Motor neuron (in vitro differentiated cells): ENCODE measurements at regions of chr11 and their contacts with region 1.

Region 1: DNA sequence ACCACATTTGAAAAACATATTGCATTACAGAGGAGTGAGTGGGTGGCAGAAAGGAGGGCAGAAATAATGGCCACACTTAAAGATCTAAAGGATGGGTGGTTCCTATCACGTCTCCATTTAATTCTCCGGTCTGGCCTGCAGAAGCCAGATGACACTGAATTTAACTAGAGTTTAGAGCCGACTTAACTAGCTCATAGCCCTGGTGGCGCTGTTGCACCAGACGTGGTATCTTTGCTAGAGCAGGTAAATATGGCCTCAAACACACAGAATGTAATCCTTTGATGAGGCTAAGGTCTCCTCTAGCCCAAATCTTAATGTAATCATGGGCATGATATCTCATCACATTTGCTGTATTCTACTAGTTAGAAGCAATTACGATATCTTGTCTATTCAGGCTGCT is 51.5 kb upstream of the GAL start:
- ATAC-seq: peak in 7 of 8 experiments; percentile 58 to 92 (median 76)
- H3K4me3 ChIP-seq: no peak overlapping the region
- H3K27ac ChIP-seq: no peak overlapping the region
- H3K4me1 ChIP-seq: no peaks in the 10 kb centered on the region

Region 2: DNA sequence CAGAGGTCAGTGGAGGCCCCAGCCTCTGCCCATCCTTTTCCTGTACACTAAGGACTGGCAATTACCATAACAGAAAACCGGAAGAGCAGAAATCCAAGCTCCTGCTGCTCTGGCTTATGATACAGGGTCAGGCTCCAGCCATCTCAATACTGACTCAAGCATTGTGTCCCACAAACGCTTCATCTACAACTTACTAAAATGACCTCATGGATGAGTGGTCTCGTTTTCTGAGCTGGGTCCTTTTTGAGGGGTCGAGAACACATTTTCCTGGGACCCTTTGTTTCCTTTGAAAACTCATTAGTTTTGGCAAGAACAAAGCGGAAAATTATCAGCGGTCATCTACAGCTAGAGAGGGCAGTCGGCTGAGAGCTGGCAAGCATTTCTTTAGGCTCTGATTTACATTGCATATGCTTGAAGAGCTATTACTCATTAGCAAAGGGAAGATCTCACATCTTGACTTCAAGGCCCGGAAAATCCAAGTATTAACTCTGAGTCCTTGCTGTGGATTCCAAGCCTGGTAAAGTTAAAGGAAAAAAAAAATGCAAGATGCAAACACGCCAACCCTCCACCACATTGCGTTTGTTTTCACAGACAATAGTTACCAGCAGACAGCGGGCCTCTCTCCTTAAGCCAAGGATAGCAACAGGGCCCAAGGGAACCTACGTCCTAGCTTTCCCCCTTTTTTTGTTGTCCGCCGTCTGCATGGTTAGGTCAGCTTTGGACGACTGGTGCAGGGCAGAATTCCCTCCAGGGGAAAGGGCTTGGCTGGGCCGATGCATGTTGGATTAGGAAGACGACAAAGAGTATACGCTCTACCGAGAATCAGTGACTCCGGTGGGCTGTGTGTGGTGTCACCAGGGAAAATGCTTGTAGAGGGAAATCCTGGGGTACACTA is 116.7 kb after region 1 on chr11:
- in situ Hi-C with region 1: loop called in 1 of 9 experiments (anchors 25 kb)
- ATAC-seq: peak in 7 of 8 experiments; percentile 18 to 79 (median 35)
- H3K4me3 ChIP-seq: no peak overlapping the region
- H3K27ac ChIP-seq: peak overlapping the region in 1 of 2 donors; percentile 68
- H3K4me1 ChIP-seq: peaks cover 18 to 23% of the 10 kb centered on the region in 2 donors

Region 3: DNA sequence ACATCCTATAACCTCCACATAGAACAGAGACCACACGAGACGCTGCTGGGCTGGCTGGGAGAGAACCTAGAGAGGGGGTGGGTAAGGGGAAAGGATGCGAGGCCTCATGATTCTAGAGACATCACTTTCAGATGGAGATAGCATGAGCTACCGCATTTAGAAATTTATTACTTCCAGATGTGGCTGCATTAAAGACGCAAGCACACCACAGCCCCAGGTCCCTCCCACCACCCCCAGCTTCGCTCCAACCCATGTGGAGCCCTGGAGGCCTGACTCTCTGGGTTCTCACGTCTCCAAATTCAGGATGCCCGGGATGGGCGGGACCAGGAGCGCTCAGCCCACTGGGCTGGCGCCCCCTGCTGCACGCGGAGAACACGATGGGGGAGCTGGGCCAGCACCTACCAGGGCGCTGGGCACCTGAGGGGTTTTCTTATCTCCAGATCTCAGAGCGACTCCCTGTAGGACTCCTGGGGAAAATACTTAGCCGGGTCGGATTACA is 257.2 kb after region 1 on chr11:
- in situ Hi-C with region 1: loop called in 1 of 9 experiments (anchors 25 kb)
- ATAC-seq: peak in 6 of 8 experiments; percentile 19 to 94 (median 61)
- H3K4me3 ChIP-seq: no peak overlapping the region
- H3K27ac ChIP-seq: no peak overlapping the region
- H3K4me1 ChIP-seq: no peaks in the 10 kb centered on the region

Region 4: DNA sequence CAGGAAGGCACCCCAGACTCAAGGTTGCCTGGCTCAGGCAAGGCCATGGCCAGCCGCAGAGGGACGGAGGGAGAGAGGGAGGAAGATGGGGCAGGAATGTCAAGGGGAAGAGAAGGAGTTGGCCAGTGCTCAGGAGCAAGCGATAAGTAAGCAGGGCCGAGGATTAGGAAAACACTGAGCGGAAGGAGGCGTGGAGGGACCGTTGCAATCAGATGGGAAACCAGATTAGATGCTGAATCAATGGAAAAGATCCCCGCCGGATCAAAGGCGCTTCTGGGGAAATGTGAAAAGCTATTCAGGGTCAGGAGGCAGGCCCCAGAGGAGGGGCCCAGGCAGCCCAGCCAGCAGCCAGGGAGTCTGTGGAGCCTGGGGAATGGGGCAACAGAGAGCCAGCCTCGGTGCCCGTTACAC is 634.6 kb after region 1 on chr11:
- in situ Hi-C with region 1: no loop called
- ATAC-seq: no peak
- H3K4me3 ChIP-seq: no peak overlapping the region
- H3K27ac ChIP-seq: no peak overlapping the region
- H3K4me1 ChIP-seq: peaks cover 0 to 2% of the 10 kb centered on the region in 2 donors